ENCODE measurements at regions of chr12 and their contacts with region 1.

Region 1: GRCh38 chr12:44930972-44931600 is 55.0 kb upstream of the NELL2 start:
- DNase-seq: peak; percentile 13
- H3K4me3 ChIP-seq: no peak overlapping the region
- H3K27ac ChIP-seq: no peak overlapping the region
- H3K27me3 ChIP-seq: no peaks in the 10 kb centered on the region
- CTCF ChIP-seq: peak; percentile 50

Region 2: DNA sequence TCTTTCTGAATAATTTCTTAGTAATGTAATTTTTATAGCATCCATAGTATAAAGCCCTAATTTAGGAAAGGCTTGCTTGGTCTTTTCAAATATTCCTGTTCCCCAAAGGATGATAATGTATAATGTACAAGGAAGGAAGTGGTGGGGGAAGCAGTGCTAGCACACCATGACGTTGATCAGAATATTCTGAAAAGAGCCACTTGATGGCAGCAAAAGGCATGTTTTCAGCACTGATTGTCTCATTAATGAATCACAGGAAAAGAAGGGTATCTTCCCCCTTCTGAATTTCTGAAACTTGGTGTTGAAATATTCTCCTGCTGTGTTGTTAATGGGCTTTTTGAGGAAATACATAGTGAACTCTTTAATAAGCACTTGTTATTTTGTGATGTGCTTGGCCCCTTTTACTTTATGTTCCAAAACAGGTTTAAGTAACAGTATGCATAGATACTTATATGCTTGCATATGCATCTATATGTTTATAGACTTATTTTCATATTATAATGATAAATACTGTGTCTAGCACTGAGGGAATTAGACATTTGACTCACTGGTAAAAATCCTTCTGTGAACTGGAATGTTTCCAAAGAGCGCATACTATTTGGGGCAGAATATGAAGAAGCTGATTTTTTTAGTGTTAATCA is 973.2 kb before region 1 on chr12:
- CTCF ChIA-PET with region 1: interaction called, 15 read pairs
- POLR2A ChIA-PET with region 1: no interaction called
- DNase-seq: peak; percentile 15
- H3K4me3 ChIP-seq: no peak overlapping the region
- H3K27ac ChIP-seq: no peak overlapping the region
- H3K27me3 ChIP-seq: no peaks in the 10 kb centered on the region
- CTCF ChIP-seq: peak; percentile 59

Region 3: GRCh38 chr12:44015335-44015941 is 915.6 kb before region 1 on chr12:
- CTCF ChIA-PET with region 1: interaction called, 17 read pairs
- POLR2A ChIA-PET with region 1: no interaction called
- DNase-seq: peak; percentile 8
- H3K4me3 ChIP-seq: no peak overlapping the region
- H3K27ac ChIP-seq: no peak overlapping the region
- H3K27me3 ChIP-seq: no peaks in the 10 kb centered on the region
- CTCF ChIP-seq: peak; percentile 66

Region 4: GRCh38 chr12:44689587-44689986 is 241.5 kb before region 1 on chr12:
- CTCF ChIA-PET with region 1: no interaction called
- POLR2A ChIA-PET with region 1: no interaction called
- DNase-seq: no peak
- H3K4me3 ChIP-seq: no peak overlapping the region
- H3K27ac ChIP-seq: no peak overlapping the region
- H3K27me3 ChIP-seq: no peaks in the 10 kb centered on the region
- CTCF ChIP-seq: no peak